Transverse colon (tissue), 4 donors: ENCODE measurements at regions of chr17 and their contacts with region 1.

Region 1: DNA sequence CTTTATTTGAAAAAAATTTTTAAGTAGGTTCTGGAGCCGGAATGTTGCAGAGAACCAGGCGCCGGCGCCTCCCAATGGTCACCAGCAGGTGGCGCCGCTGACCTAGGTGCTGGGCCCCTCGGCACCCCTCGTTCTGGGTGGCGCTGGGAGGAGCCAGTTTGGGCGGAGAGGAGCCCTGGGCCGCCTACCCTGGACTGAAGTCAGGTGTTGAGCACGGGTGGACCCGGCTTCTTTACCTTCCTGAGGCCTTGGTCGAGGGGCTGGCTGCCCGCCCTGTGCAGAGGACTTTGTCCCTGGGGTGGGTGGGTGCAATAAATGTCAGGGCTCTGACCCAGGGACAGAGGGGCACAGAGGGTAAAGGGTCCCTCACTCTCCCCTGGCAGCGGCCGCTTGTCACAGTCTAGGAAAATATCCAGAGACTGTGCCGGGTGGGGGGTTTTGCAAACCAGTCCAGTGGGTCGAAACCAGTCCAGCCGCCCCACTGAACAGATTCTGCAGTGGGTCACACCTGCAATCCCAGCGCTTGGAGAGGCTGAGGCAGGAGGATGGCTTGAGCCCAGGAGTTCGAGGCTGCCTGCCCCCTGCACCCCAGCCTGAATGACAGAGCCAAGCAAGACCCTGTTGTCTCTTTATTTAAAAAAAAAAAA is 30.1 kb upstream of the TNFRSF13B start:
- DNase-seq: peak; percentile 84
- H3K4me3 ChIP-seq: peak overlapping the region in 1 of 4 donors; percentile 8
- H3K27ac ChIP-seq: no peak overlapping the region
- H3K4me1 ChIP-seq: peaks cover 4 to 8% (median 6%) of the 10 kb centered on the region in 4 donors
- H3K27me3 ChIP-seq: no peaks in the 10 kb centered on the region
- CTCF ChIP-seq: peak; percentile 93 to 99 (median 97)
- EP300 ChIP-seq: no peak
- POLR2A ChIP-seq: no peak

Region 2: GRCh38 chr17:17041571-17042380 is 39.8 kb after region 1 on chr17:
- in situ Hi-C with region 1: no loop called
- intact Hi-C with region 1: no loop called
- DNase-seq: peak; percentile 99
- H3K4me3 ChIP-seq: peak overlapping the region; percentile 12 to 65 (median 50)
- H3K27ac ChIP-seq: peak overlapping the region; percentile 72 to 86 (median 78)
- H3K4me1 ChIP-seq: peaks cover 13 to 43% (median 38%) of the 10 kb centered on the region in 4 donors
- H3K27me3 ChIP-seq: no peaks in the 10 kb centered on the region
- CTCF ChIP-seq: no peak
- EP300 ChIP-seq: no peak
- POLR2A ChIP-seq: peak; percentile 37

Region 3: GRCh38 chr17:17108451-17109049 is 106.6 kb after region 1 on chr17:
- in situ Hi-C with region 1: no loop called
- intact Hi-C with region 1: no loop called
- DNase-seq: peak; percentile 58
- H3K4me3 ChIP-seq: no peak overlapping the region
- H3K27ac ChIP-seq: peak overlapping the region; percentile 81 to 84 (median 83)
- H3K4me1 ChIP-seq: peaks cover 34 to 60% (median 47%) of the 10 kb centered on the region in 4 donors
- H3K27me3 ChIP-seq: no peaks in the 10 kb centered on the region
- CTCF ChIP-seq: no peak
- EP300 ChIP-seq: no peak
- POLR2A ChIP-seq: no peak

Region 4: DNA sequence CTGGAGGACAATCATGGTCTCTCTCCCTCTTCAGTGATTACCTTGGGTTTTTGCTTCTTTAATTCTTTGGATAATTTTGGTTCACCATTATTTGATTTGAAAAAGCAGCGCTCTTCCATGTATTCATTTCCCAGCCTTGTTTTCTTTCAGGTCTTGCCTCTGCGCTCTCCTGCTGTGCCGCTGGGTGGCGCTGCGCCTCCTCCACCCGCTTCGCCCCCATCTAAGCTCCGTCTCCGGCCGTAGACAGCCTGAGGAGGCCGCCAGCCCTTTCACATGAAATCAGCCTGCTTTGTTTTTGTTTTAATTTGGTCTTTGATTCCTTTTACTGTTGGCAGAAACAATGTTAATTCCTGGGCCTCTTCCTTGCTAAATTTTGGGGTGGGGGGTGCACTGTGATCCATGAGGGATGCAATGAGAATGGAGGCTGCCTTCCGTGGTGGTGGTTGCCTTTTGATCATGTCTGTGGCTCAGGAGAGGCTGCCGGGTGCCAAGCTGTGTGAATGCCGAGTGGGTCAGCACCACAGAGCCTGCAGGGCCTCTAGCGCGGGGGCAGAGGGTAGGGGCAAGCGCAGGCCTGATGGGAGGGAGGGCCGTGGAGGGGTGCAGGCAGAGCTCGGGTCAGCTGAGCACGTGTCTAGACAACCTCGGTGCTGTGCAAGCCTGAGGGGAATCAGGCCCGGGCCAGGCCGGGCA is 140.0 kb after region 1 on chr17:
- in situ Hi-C with region 1: loop called in 1 of 4 experiments (anchors 25 kb)
- intact Hi-C with region 1: no loop called
- DNase-seq: no peak
- H3K4me3 ChIP-seq: no peak overlapping the region
- H3K27ac ChIP-seq: no peak overlapping the region
- H3K4me1 ChIP-seq: peaks cover 0 to 3% (median 0%) of the 10 kb centered on the region in 4 donors
- H3K27me3 ChIP-seq: no peaks in the 10 kb centered on the region
- CTCF ChIP-seq: peak; percentile 58 to 73 (median 63)
- EP300 ChIP-seq: no peak
- POLR2A ChIP-seq: no peak

Region 5: DNA sequence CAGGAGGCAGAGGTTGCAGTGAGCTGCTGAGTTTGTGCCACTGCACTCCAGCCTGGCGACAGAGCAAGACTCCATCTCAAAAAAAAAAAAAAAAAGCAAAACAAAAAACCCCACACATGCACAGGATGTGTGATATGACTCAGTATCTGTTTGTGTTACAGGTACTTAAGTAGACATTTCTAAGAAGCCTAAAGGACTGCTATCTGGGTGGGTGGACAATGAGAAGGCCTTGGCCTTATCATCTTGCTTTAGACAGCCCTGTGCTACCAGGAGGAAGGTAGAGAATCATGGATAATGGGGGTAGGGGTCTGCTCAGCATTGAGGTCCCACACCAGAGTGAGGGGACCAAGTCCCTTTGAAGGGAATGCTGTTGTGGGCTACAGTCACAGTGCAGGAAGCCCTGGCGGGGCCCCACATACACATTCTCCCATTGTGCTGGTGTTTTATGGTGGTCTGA is 177.4 kb after region 1 on chr17:
- in situ Hi-C with region 1: no loop called
- intact Hi-C with region 1: no loop called
- DNase-seq: no peak
- H3K4me3 ChIP-seq: no peak overlapping the region
- H3K27ac ChIP-seq: peak overlapping the region in 3 of 4 donors; percentile 0 to 55 (median 20)
- H3K4me1 ChIP-seq: no peaks in the 10 kb centered on the region
- H3K27me3 ChIP-seq: no peaks in the 10 kb centered on the region
- CTCF ChIP-seq: no peak
- EP300 ChIP-seq: no peak
- POLR2A ChIP-seq: no peak

Region 6: GRCh38 chr17:17216776-17217175 is 214.8 kb after region 1 on chr17:
- in situ Hi-C with region 1: no loop called
- intact Hi-C with region 1: no loop called
- DNase-seq: no peak
- H3K4me3 ChIP-seq: no peak overlapping the region
- H3K27ac ChIP-seq: no peak overlapping the region
- H3K4me1 ChIP-seq: no peaks in the 10 kb centered on the region
- H3K27me3 ChIP-seq: no peaks in the 10 kb centered on the region
- CTCF ChIP-seq: no peak
- EP300 ChIP-seq: no peak
- POLR2A ChIP-seq: no peak

Region 7: DNA sequence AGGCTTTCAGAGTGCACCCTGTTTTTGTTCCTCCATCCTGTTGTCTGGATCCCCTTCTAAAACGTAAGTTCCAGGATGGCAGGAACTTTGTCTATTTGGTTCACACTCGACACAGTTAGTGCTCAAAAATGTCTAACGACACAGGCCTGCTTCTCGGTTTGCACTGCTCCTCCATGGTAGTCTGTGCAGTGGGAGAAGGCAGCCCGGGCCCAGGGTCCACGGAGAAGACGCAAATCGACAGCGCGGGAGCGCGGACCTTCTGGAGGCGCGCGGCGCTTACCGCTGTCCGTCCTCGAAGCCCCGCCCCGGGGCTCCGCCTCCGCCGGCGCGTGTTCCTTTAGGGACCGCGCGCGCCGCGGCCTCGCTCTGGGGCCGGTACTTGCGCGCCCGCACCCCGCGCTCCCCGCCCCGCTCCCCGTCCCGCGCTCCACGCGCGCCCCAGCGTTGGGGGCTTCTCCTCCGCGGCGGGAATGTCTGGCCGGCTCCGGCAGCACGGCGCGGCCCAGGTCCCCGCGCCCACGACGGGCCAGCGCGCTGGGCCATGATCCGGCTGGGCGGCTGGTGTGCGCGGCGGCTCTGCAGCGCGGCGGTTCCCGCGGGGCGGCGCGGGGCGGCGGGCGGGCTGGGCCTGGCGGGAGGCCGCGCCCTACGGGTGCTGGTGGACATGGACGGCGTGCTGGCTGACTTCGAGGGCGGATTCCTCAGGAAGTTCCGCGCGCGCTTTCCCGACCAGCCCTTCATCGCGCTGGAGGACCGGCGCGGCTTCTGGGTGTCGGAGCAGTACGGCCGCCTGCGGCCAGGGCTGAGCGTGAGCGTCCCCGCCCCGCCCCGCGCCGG is 301.2 kb after region 1 on chr17 and contains the start of gene NT5M:
- in situ Hi-C with region 1: loop called in 3 of 4 experiments (anchors 25 kb)
- intact Hi-C with region 1: no loop called
- DNase-seq: peak; percentile 80
- H3K4me3 ChIP-seq: peak within 1 kb of the TSS; percentile 40 to 58 (median 50)
- H3K27ac ChIP-seq: peak within 1 kb of the TSS; percentile 75 to 80 (median 80)
- H3K4me1 ChIP-seq: peaks cover 10 to 29% (median 15%) of the 10 kb centered on the region in 4 donors
- H3K27me3 ChIP-seq: no peaks in the 10 kb centered on the region
- CTCF ChIP-seq: no peak
- EP300 ChIP-seq: no peak
- POLR2A ChIP-seq: no peak
- total RNA-seq, gene NT5M: 0.68 to 4.2 (median 1.7) TPM in 3 of 4 donors, not detected in the other